ENCODE measurements at regions of chr2 and their contacts with region 1.

Region 1: DNA sequence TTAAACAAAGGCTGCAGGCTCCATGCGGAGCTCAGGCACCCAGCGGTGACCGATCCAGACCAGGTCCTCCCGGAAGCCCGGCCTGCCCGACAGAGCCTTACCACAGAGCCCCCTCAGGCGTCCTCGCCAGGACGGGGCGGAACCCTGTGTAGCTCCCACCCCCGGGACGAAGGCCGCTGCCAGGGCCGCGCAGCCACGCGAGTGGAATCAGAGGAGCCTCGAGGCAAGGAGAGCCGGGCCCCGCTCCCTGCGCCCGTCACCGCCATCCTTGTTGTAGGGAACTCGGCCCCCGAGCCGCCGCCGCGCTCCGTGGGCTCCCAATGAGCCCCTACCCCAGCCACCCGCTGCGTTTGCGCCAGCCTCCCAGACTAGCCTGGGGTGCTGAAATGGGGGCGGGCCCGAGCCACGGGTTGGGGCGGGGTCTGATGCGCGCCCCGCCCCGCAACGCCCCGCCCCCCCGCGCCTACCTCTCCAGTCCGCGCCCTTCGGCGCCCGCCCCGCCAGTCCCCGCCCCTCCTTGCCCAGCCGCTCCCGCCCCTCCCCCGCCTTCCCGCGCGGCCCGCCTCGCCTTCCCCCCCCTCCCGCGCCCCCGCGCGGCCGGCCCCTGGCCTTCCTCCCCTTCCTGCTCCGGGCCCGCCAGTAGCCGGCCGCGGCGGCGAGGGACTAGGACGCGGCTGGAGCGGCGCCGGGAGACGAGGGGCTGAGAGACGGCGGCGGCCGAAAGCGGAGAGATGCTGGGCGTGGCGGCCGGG is at the start of gene LIMS1:
- DNase-seq: peak; percentile 73 to 96 (median 86)

Region 2: DNA sequence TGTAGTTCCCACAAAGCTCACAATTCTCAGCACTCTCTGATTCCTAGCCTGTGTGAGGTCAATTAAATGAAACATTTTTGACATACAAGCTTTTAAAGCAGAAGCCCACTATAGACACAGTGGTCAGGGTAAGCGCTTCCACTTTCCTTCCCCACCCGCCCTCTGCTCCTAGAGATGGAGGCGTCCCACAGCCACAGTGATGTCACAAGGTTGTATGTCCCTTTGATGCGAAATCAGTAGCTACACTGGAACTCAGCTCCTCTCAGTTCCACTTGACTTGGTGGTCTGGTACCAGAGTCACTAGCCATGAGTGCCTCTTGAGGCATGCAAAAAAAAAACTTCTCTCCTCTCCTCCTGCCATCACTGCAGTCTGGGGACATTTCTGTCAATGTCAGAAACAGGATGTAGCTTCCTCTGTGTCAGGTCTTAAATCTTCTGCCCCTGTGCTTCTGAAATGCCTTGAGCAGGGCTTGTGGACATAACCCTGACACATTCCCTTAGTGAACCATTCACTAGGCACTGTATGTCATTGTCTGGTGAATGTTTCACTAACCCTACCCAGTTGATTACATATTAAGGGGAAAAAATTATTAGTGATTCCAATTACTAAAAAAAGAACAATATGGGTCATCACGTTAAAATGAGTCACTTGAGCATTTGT is 148.5 kb before region 1 on chr2:
- intact Hi-C with region 1: no loop called
- DNase-seq: no peak

Region 3: GRCh38 chr2:108448678-108449493 is 85.1 kb before region 1 on chr2 and contains the start of gene GCC2:
- intact Hi-C with region 1: loop called (anchors 10 kb)
- DNase-seq: peak; percentile 90 to 99 (median 95)

Region 4: GRCh38 chr2:108477099-108477498 is 56.9 kb before region 1 on chr2:
- intact Hi-C with region 1: no loop called
- DNase-seq: no peak

Region 5: DNA sequence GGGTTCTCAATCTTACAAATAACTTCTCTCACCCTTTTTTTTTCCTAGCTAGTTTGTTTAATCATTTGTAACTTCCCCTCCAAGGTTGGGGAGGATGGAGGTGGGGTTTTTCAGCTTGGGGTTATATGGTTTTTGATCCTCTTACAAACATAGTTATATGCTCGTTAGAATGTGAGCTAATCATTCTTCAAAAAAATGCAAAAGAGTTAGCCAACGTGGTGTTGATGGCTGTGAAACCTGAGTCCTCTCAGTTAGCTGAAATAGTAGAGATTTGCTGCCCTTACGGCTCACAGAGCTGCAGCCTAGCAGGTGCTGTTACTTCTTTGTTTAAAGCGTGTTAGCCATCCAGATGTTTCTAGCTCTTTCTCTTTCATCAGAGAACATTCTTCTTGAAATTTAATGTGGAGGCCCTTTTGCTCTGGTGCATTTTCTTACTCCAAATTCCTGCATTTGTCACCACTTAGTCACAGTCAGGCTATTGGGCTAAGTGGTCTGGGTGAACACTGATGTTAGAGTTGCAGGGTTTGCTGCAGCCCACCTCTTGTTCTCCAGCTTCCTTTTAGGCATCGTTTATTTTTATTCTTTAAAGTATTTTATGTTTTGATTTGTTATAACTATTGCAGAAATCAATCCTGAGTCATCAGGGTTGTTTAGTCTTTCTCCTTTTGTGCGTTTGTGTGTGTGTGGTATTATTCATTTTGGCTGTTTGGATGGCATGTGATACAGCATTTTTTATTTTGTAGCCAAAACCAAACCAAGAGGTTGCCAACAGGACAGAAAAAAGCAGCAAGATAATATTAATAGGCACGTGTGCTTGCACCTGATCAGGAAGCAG is 41.3 kb after region 1 on chr2:
- intact Hi-C with region 1: loop called (anchors 5 kb)
- DNase-seq: no peak

Measured in posterior cingulate gyrus (tissue), 11 donors.